ENCODE measurements at regions of chr9 and their contacts with region 1.

Region 1: DNA sequence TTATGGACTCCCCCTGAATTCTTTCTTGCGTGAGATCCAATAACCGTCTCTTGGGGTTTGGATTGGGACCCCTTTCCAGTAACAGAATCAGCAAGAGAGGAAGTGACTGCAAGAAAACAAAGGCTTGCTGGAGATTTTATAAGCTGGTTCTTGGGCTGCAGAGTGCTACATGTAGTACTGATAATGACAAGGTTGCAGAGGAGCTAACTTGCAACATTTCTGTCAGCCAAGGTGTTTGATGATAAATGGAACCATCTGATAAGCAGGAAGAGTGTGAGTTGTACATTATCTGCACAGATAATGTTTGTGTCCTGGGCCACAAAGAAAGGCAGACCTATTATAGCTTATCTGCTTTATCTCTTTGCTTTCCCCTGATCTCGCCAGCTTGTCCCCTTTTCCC is 37.1 kb downstream of the DNAJB5 start:
- DNase-seq: no peak
- ATAC-seq: peak; percentile 70
- H3K4me3 ChIP-seq: no peak overlapping the region
- H3K27ac ChIP-seq: peak overlapping the region; percentile 14; the same call in 1 of the 2 replicates
- H3K4me1 ChIP-seq: peaks cover 12% of the 10 kb centered on the region
- H3K27me3 ChIP-seq: no peaks in the 10 kb centered on the region
- CTCF ChIP-seq: no peak

Region 2: DNA sequence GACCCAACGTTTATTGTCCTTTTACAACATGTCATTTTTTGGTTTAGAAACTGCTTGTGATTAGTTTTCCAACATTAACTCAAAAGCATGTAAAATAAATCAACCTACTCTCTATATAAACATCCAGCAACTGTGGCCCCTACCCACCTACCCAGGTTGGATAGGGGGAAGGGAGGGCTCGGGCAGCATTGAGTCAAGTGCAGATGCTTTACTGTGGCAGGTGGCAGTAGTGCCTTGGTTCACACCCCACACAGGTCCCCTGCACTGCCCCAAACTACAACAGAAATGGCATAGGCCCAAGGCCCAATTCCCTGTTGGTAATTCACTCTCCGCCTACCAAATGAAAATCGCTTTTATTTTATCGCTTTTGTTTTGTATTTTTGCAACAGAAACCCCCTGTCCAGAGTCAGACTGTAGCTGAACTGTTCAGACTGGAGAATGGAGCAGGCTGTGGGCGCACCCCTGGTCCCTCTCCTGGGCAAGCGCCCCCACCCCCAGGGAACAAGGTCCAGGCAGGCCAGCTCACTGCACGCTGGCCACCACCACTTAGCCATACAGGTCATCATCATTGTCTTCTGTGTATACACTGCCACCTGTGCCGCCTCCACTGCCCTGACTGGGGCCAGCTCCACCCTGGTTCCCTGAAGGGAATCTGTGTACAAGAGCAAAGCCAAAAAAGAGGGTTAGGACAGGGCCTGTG is 30.1 kb after region 1 on chr9:
- CTCF ChIA-PET with region 1: no interaction called
- POLR2A ChIA-PET with region 1: no interaction called
- in situ Hi-C with region 1: no loop called
- intact Hi-C with region 1: loop called (anchors 1 kb)
- DNase-seq: no peak
- ATAC-seq: no peak
- H3K4me3 ChIP-seq: no peak overlapping the region
- H3K27ac ChIP-seq: no peak overlapping the region
- H3K4me1 ChIP-seq: no peaks in the 10 kb centered on the region
- H3K27me3 ChIP-seq: no peaks in the 10 kb centered on the region
- CTCF ChIP-seq: no peak

Region 3: GRCh38 chr9:35096035-35096849 is 69.6 kb after region 1 on chr9 and contains the start of gene PIGO:
- CTCF ChIA-PET with region 1: no interaction called
- POLR2A ChIA-PET with region 1: interaction called, 11 read pairs
- in situ Hi-C with region 1: no loop called
- intact Hi-C with region 1: no loop called
- DNase-seq: no peak
- ATAC-seq: peak; percentile 96
- H3K4me3 ChIP-seq: peak within 1 kb of the TSS; percentile 78 to 91
- H3K27ac ChIP-seq: peak within 1 kb of the TSS; percentile 93
- H3K4me1 ChIP-seq: peaks cover 7% of the 10 kb centered on the region
- H3K27me3 ChIP-seq: no peaks in the 10 kb centered on the region
- CTCF ChIP-seq: no peak
- total RNA-seq, gene PIGO: 58.7 TPM

Measured in Panc1 (cell line).